ENCODE measurements at regions of chr4 and their contacts with region 1.

Region 1: GRCh38 chr4:101020956-101021355 is 326.4 kb downstream of the PPP3CA start:
- DNase-seq: peak; percentile 13
- H3K4me3 Mint-ChIP-seq: peak overlapping the region; percentile 12
- H3K27ac Mint-ChIP-seq: peak overlapping the region; percentile 50
- H3K4me1 Mint-ChIP-seq: peaks cover 58% of the 10 kb centered on the region
- H3K27me3 Mint-ChIP-seq: no peaks in the 10 kb centered on the region

Region 2: GRCh38 chr4:100823066-100823992 is 197.6 kb before region 1 on chr4:
- CTCF ChIA-PET with region 1: interaction called, 8 read pairs
- POLR2A ChIA-PET with region 1: no interaction called
- intact Hi-C with region 1: loop called (anchors 1 kb)
- DNase-seq: peak; percentile 57
- H3K4me3 Mint-ChIP-seq: no peak overlapping the region
- H3K27ac Mint-ChIP-seq: peak overlapping the region; percentile 88
- H3K4me1 Mint-ChIP-seq: peaks cover 15% of the 10 kb centered on the region
- H3K27me3 Mint-ChIP-seq: no peaks in the 10 kb centered on the region

Region 3: DNA sequence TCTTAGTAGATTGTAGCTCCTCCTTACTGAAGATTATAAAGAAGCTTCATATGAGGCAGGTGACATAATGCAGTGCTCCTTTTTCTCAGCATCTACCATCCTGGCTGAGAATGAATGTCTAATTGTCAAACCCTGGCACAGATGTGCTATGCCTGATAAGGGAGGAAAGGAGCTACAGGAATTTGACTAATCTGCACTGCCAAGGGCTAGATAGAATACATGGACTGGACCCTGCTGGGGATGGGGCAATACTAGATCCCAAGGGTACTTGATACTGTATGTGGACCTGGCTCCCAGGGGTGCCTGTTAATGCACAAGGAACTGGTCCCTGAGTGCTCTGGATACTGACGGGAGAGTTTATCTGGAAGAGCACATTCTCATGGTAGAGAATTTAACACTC is 140.9 kb before region 1 on chr4:
- CTCF ChIA-PET with region 1: no interaction called
- POLR2A ChIA-PET with region 1: no interaction called
- intact Hi-C with region 1: no loop called
- DNase-seq: no peak
- H3K4me3 Mint-ChIP-seq: no peak overlapping the region
- H3K27ac Mint-ChIP-seq: no peak overlapping the region
- H3K4me1 Mint-ChIP-seq: no peaks in the 10 kb centered on the region
- H3K27me3 Mint-ChIP-seq: peaks cover 2% of the 10 kb centered on the region

Region 4: GRCh38 chr4:100898844-100899243 is 122.1 kb before region 1 on chr4:
- CTCF ChIA-PET with region 1: no interaction called
- POLR2A ChIA-PET with region 1: no interaction called
- intact Hi-C with region 1: no loop called
- DNase-seq: no peak
- H3K4me3 Mint-ChIP-seq: no peak overlapping the region
- H3K27ac Mint-ChIP-seq: no peak overlapping the region
- H3K4me1 Mint-ChIP-seq: peaks cover 14% of the 10 kb centered on the region
- H3K27me3 Mint-ChIP-seq: no peaks in the 10 kb centered on the region

Region 5: DNA sequence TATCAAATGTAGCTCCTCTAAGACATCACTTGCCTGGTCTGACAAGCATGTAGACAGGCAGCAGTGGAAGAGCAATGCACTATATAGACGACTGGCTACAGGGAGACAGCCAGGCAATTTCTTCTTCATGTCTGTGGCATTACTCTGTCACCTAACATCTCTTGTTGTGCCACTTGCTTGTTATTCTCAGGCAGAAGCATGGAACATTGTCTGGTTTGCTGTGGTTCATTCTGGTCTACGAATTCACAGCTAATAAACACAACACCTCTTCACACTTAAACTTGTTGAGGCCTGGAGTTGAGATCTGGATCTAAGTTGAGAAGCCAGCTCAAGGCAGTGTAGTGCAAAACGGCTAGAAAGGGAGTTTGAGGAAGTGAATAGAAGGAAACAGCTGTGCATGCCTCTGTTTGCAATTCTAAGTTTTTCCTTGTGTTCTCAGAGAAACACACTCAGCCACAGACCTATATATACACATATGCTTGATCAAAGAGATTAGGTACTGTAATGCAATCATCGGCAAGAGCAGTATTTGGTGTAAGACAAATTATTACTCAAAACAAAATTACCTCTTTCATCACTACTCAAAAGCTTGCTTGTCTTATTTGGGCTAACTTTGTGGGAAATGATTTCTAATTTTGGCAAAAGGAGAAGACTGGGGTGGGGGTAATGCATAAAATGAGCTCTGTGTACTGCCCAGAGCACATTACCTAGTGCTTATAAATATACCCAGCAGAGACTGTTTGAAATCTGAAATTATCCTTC is 82.6 kb after region 1 on chr4:
- CTCF ChIA-PET with region 1: no interaction called
- POLR2A ChIA-PET with region 1: interaction called, 3 read pairs
- intact Hi-C with region 1: loop called (anchors 2 kb)
- DNase-seq: no peak
- H3K4me3 Mint-ChIP-seq: no peak overlapping the region
- H3K27ac Mint-ChIP-seq: peak overlapping the region; percentile 42
- H3K4me1 Mint-ChIP-seq: peaks cover 19% of the 10 kb centered on the region
- H3K27me3 Mint-ChIP-seq: no peaks in the 10 kb centered on the region

Region 6: DNA sequence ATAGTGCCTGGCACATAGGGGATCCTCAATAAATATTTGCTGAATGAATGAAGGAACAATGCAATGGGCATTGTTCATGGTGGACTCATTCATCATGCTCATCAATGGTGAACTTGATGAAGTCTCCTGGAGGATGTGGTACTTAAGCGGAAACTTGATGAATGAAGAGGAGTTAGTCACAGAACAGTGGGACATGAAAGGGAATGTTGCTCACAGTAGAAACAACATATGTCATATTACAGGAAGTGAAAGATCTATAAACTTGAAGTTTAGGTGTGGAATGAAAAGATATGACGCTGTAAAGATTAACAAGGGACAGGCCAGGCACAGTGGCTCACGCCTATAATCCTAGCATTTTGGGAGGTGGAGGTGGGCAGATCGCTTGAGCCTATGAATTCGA is 102.3 kb after region 1 on chr4:
- CTCF ChIA-PET with region 1: no interaction called
- POLR2A ChIA-PET with region 1: no interaction called
- intact Hi-C with region 1: no loop called
- DNase-seq: no peak
- H3K4me3 Mint-ChIP-seq: no peak overlapping the region
- H3K27ac Mint-ChIP-seq: no peak overlapping the region
- H3K4me1 Mint-ChIP-seq: peaks cover 30% of the 10 kb centered on the region
- H3K27me3 Mint-ChIP-seq: no peaks in the 10 kb centered on the region

Region 7: GRCh38 chr4:101232074-101232776 is 211.3 kb after region 1 on chr4:
- CTCF ChIA-PET with region 1: no interaction called
- POLR2A ChIA-PET with region 1: no interaction called
- intact Hi-C with region 1: loop called (anchors 5 kb)
- DNase-seq: peak; percentile 65
- H3K4me3 Mint-ChIP-seq: no peak overlapping the region
- H3K27ac Mint-ChIP-seq: no peak overlapping the region
- H3K4me1 Mint-ChIP-seq: peaks cover 29% of the 10 kb centered on the region
- H3K27me3 Mint-ChIP-seq: no peaks in the 10 kb centered on the region

Region 8: DNA sequence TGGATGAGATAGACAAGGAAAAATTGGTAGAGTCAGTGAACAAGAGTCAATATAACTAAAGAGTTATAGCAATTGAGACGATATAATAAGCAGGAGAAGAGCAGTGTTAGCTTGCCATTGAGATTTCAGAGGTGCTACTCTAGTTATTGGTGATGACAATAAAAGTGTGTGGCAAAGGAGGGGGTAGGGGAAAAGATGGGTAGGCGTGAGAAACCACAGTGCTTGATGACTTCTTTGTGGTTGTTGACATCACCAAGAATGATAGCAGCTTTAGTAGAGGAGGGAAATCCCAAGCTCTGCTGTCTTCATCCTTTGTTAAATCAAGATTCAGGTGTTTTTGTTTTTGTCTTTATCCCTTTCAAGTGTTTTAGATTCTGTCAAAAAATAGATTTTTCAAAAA is 506.2 kb after region 1 on chr4:
- CTCF ChIA-PET with region 1: no interaction called
- POLR2A ChIA-PET with region 1: no interaction called
- intact Hi-C with region 1: loop called (anchors 5 kb)
- DNase-seq: peak; percentile 87
- H3K4me3 Mint-ChIP-seq: peak overlapping the region; percentile 12
- H3K27ac Mint-ChIP-seq: peak overlapping the region; percentile 30
- H3K4me1 Mint-ChIP-seq: peaks cover 20% of the 10 kb centered on the region
- H3K27me3 Mint-ChIP-seq: peaks cover 38% of the 10 kb centered on the region